K562 (cell line): ENCODE measurements at regions of chr1 and their contacts with region 1.

Region 1: DNA sequence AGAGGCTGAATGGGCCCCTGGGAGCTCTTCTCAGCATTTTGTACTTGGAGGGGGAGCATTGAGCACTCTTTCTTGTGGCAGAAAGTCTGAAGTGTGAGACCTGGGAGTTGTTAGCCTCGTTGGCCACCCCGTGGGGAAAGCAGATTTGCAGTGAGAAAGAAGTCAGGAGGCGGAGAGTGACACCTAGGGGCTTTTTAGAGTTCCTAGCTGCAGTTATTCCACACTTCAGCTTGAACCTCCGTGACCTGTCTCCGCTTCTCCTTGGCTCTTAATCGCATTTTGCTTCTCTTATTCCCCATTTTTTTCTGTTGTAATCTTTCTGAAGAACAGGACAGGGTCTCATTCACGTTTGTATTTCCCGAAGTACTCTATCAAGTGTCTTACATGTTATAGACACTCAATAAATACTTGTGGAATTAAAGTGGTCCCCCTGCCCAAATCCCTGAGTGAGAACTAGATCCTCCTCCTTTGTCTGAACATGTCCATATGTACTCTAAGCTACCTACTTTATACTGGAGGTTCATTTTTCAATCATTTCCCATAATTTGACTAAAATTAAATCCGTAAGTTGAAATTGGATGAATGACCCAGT is 14.5 kb upstream of the C1orf141 start:
- DNase-seq: peak; percentile 62 to 90 (median 72)
- ATAC-seq: peak; percentile 98
- H3K4me3 ChIP-seq: no peak overlapping the region
- H3K27ac ChIP-seq: peak overlapping the region; percentile 7; the same call in 1 of the 3 replicates
- H3K4me1 ChIP-seq: peaks cover 3 to 6% of the 10 kb centered on the region in 2 experiments; a peak in 2 of 5 replicates
- H3K27me3 ChIP-seq: no peaks in the 10 kb centered on the region
- CTCF ChIP-seq: peak; percentile 84 to 99 (median 99)
- EP300 ChIP-seq: no peak
- POLR2A ChIP-seq: no peak
- RAD21 ChIP-seq: peak; percentile 98

Region 2: DNA sequence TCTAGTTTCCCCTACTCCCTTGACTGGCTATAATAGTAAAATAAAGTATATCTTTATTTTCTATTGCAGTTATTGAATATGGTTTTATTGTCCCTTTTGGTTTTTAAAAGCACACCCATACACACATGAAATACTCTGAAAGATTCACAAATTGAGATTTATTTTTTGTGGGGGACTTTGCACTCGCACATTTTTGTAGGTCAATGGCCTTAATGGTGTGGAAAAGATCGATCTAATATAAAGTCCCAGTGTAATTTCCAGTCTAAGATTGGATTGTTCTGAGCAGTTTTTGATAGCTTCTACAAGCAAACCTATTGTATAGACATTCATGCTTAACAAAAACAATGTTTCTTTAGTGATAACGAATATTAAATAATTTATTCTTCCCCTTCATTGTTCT is 288.7 kb before region 1 on chr1:
- CTCF ChIA-PET with region 1: no interaction called
- POLR2A ChIA-PET with region 1: no interaction called
- in situ Hi-C with region 1: no loop called
- intact Hi-C with region 1: loop called (anchors 5 kb)
- DNase-seq: no peak
- ATAC-seq: no peak
- H3K4me3 ChIP-seq: no peak overlapping the region
- H3K27ac ChIP-seq: no peak overlapping the region
- H3K4me1 ChIP-seq: no peaks in the 10 kb centered on the region
- H3K27me3 ChIP-seq: no peaks in the 10 kb centered on the region
- CTCF ChIP-seq: no peak
- EP300 ChIP-seq: no peak
- POLR2A ChIP-seq: no peak
- RAD21 ChIP-seq: no peak

Region 3: GRCh38 chr1:66924756-66925557 is 224.3 kb before region 1 on chr1 and contains the starts of genes DNAI4 and MIER1:
- CTCF ChIA-PET with region 1: no interaction called
- POLR2A ChIA-PET with region 1: interaction called, 3 read pairs
- in situ Hi-C with region 1: no loop called
- intact Hi-C with region 1: loop called (anchors 5 kb)
- DNase-seq: peak; percentile 98 to 99 (median 99)
- ATAC-seq: peak; percentile 85
- H3K4me3 ChIP-seq: peak within 1 kb of the TSS; percentile 85
- H3K27ac ChIP-seq: peak within 1 kb of the TSS; percentile 81
- H3K4me1 ChIP-seq: peaks cover 0 to 16% of the 10 kb centered on the region in 2 experiments; a peak in 3 of 5 replicates
- H3K27me3 ChIP-seq: no peaks in the 10 kb centered on the region
- CTCF ChIP-seq: peak; percentile 6 to 37 (median 10); a peak in 3 of 6 replicates
- EP300 ChIP-seq: no peak; the same call in 1 of the 2 replicates
- POLR2A ChIP-seq: peak; percentile 88
- RAD21 ChIP-seq: peak in 1 of 2 experiments; percentile 9; a peak in 1 of 4 replicates
- polyA plus RNA-seq, gene DNAI4: 1.8 to 2.2 TPM
- polyA plus RNA-seq, gene MIER1: 21.5 to 23.7 TPM

Region 4: GRCh38 chr1:67001682-67002425 is 147.4 kb before region 1 on chr1:
- CTCF ChIA-PET with region 1: interaction called, 34 read pairs
- POLR2A ChIA-PET with region 1: no interaction called
- in situ Hi-C with region 1: loop called (anchors 5 kb)
- intact Hi-C with region 1: no loop called
- DNase-seq: peak in 1 of 4 experiments; percentile 21
- ATAC-seq: peak; percentile 68
- H3K4me3 ChIP-seq: no peak overlapping the region
- H3K27ac ChIP-seq: no peak overlapping the region
- H3K4me1 ChIP-seq: peaks cover 0 to 4% of the 10 kb centered on the region in 2 experiments; a peak in 2 of 5 replicates
- H3K27me3 ChIP-seq: no peaks in the 10 kb centered on the region
- CTCF ChIP-seq: no peak
- EP300 ChIP-seq: no peak
- POLR2A ChIP-seq: no peak
- RAD21 ChIP-seq: no peak

Region 5: DNA sequence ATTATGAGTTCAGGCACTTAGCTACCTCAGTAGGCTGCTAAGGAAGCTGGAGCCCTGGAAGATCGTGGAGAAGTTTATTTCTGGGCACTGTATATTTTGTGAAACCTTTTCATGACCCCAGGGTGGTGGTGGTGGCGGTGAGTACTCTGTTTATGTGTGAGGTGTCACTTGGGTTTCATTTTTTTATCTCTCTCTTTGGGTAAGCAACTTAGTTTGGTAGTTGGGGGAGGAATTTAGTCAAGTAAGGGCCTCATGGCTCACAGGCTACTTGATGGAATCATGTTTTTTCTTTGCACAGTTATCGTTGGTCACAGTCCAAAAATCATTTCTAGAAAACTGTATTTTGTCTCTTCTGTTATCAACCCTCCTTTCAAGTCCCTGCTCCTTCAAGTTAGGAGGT is 48.4 kb before region 1 on chr1:
- CTCF ChIA-PET with region 1: no interaction called
- POLR2A ChIA-PET with region 1: no interaction called
- in situ Hi-C with region 1: no loop called
- intact Hi-C with region 1: loop called (anchors 5 kb)
- DNase-seq: no peak
- ATAC-seq: peak; percentile 57
- H3K4me3 ChIP-seq: no peak overlapping the region
- H3K27ac ChIP-seq: peak overlapping the region; percentile 14; the same call in 1 of the 3 replicates
- H3K4me1 ChIP-seq: peaks cover 0 to 12% of the 10 kb centered on the region in 2 experiments; a peak in 2 of 5 replicates
- H3K27me3 ChIP-seq: no peaks in the 10 kb centered on the region
- CTCF ChIP-seq: no peak
- EP300 ChIP-seq: no peak
- POLR2A ChIP-seq: no peak
- RAD21 ChIP-seq: no peak

Region 6: GRCh38 chr1:67500413-67500959 is 351.2 kb after region 1 on chr1:
- CTCF ChIA-PET with region 1: no interaction called
- POLR2A ChIA-PET with region 1: no interaction called
- in situ Hi-C with region 1: loop called (anchors 10 kb)
- intact Hi-C with region 1: loop called (anchors 5 kb)
- DNase-seq: peak; percentile 89 to 95 (median 90)
- ATAC-seq: peak; percentile 99
- H3K4me3 ChIP-seq: no peak overlapping the region
- H3K27ac ChIP-seq: no peak overlapping the region
- H3K4me1 ChIP-seq: peaks cover 0 to 5% of the 10 kb centered on the region in 2 experiments; a peak in 3 of 5 replicates
- H3K27me3 ChIP-seq: no peaks in the 10 kb centered on the region
- CTCF ChIP-seq: peak; percentile 97 to 99 (median 98)
- EP300 ChIP-seq: no peak
- POLR2A ChIP-seq: no peak
- RAD21 ChIP-seq: peak; percentile 98 to 99